ENCODE measurements at regions of chr19 and their contacts with region 1.

Region 1: DNA sequence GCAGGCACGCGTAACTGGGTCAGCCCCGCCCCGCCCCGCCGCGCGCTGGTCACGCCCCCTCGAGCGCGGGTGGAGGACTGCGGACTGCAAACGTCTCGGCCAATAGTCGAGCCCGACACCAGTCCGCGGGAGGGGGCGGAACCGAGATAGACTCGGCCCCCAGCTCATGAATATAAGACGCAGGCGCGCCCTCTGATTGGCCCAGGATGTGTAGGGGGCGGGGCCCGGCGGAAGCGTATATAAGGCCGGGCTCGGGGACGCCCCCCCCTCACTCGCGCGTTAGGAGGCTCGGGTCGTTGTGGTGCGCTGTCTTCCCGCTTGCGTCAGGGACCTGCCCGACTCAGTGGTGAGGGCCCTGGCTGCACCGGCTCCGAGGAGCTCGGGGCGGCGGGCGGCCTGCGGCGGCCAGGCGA is at the start of gene CIRBP:
- DNase-seq: peak; percentile 97 to 100 (median 99)
- ATAC-seq: peak; percentile 76 to 84
- H3K4me3 Mint-ChIP-seq: peak within 1 kb of the TSS; percentile 82 to 93 (median 89)
- H3K27ac Mint-ChIP-seq: peak within 1 kb of the TSS; percentile 83 to 97 (median 94)
- H3K4me1 Mint-ChIP-seq: peaks cover 40 to 82% (median 77%) of the 10 kb centered on the region in 4 donors
- H3K27me3 Mint-ChIP-seq: no peaks in the 10 kb centered on the region
- polyA plus RNA-seq, gene CIRBP: 204 to 273 (median 262) TPM

Region 2: GRCh38 chr19:984165-984967 is 284.7 kb before region 1 on chr19 and contains the start of gene WDR18:
- POLR2A ChIA-PET with region 1: interaction called, 10 read pairs
- DNase-seq: peak; percentile 73 to 94 (median 80)
- ATAC-seq: peak; percentile 86 to 89
- H3K4me3 Mint-ChIP-seq: peak within 1 kb of the TSS; percentile 87 to 99 (median 92)
- H3K27ac Mint-ChIP-seq: peak within 1 kb of the TSS; percentile 63 to 96 (median 92)
- H3K4me1 Mint-ChIP-seq: peaks cover 12 to 25% (median 20%) of the 10 kb centered on the region in 4 donors
- H3K27me3 Mint-ChIP-seq: no peaks in the 10 kb centered on the region
- polyA plus RNA-seq, gene WDR18: 51.2 to 72.7 (median 64.1) TPM

Region 3: DNA sequence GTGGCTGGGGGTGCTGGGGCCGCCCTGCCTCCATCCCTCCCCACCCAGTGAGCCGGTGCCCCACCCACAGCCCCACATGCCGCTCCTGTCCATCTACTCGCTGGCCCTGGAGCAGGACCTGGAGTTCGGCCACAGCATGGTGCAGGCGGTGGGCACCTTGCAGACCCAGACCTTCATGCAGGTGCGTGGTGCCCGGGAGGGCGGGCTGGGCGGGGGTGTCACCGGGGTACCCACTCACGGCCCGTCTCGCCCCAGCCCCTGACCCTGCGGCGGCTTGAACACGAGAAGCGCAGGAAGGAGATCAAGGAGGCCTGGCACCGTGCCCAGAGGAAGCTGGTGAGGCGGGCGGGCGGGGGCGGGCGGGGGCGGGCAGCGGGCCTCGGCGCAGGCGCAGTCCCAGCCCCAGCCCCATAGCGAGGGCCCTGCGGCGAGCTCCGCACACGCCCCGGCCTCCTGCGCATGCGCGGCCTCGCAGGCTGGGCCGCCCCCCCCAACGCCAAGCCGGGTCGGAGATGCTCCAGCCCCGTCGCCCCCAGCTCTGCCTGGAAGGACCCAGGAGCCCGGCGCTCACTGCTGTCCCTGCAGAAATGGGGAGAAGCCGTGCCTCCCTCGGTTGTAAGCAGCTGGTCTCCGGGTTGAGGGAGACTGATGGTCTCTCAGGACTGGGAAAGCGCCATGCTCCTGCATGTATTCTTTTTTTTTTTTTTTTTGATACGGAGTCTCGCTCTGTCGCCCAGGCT is 194.4 kb before region 1 on chr19:
- POLR2A ChIA-PET with region 1: interaction called, 36 read pairs
- DNase-seq: peak; percentile 91 to 100 (median 95)
- ATAC-seq: peak; percentile 37 to 42
- H3K4me3 Mint-ChIP-seq: peak overlapping the region; percentile 77 to 96 (median 86)
- H3K27ac Mint-ChIP-seq: peak overlapping the region; percentile 97 to 100 (median 99)
- H3K4me1 Mint-ChIP-seq: peaks cover 23 to 63% (median 51%) of the 10 kb centered on the region in 4 donors
- H3K27me3 Mint-ChIP-seq: peaks cover 0 to 4% (median 0%) of the 10 kb centered on the region in 5 donors

Region 4: DNA sequence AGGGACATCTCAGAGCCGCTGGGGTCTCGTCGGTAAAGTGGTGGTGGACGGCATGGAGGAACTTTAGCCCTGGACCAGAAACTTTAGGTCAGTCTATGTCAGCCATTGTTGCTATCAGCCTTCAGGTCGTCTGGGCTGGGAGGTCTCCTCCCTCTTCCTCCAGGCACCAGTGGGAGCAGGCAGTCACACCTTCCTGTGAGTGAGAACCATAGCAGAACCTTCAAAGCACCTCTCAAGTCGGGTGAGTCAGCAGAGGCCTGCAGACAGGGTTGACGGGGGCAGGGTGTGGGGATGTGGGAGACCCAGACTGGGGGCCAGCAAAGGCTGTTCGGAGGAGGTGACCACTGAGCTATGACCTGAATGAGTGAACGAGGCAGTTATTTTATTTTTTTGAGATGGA is 79.7 kb before region 1 on chr19:
- POLR2A ChIA-PET with region 1: interaction called, 14 read pairs
- DNase-seq: peak in 2 of 10 donors; percentile 33 to 39
- ATAC-seq: peak; percentile 31
- H3K4me3 Mint-ChIP-seq: peak overlapping the region in 3 of 10 donors; percentile 14 to 63 (median 52)
- H3K27ac Mint-ChIP-seq: peak overlapping the region in 8 of 10 donors; percentile 13 to 95 (median 78)
- H3K4me1 Mint-ChIP-seq: peaks cover 6 to 20% (median 19%) of the 10 kb centered on the region in 4 donors
- H3K27me3 Mint-ChIP-seq: no peaks in the 10 kb centered on the region

Region 5: DNA sequence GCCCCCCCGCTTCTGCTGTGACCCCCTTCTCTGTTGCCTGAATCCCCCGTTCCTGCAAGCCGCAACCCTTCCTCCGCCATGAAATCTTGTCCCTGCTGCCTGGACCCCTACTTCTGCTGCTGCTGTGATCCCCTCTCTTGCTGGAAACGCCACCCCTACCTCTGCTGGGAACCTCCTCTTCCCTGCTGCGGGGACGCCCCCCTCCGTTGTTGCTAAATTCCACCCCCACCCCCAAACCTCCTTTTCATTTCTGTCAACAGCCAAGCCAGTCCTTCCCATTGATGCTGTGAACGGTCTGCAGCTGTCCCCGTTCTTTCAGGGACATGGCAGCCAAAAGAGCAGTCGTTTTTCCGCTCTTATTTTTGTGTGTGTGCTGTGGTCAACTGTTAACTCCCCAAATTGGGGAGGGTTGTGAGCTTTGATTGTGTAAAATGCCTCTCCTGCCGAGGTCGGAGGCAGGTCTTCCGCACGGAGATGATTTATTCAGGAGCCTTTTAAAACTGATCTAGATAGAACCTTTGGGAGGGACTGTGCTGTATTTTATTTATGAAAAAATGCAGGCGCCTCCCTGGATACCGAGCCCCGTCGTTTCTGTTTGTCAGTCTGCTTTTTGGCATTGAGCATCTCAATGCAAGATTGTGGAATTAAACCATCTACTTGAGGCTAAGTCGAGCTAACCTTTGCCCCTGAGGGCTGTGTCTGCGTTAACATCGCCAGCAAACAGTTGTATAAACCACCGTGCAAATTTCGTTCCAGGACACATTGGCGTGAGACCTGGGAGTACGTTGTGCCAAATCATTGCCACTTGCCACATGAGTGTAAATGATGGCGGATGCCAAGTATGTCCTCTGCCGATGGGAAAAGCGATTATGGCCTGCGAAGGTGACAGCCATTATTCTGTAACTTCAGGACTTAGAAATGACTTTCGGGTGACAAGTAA is 86.8 kb after region 1 on chr19:
- POLR2A ChIA-PET with region 1: interaction called, 16 read pairs
- DNase-seq: no peak
- ATAC-seq: no peak
- H3K4me3 Mint-ChIP-seq: peak overlapping the region; percentile 72 to 96 (median 87)
- H3K27ac Mint-ChIP-seq: peak overlapping the region; percentile 12 to 90 (median 78)
- H3K4me1 Mint-ChIP-seq: peaks cover 11 to 25% (median 16%) of the 10 kb centered on the region in 4 donors
- H3K27me3 Mint-ChIP-seq: no peaks in the 10 kb centered on the region

Region 6: GRCh38 chr19:1490311-1491113 is 221.4 kb after region 1 on chr19 and contains the start of gene PCSK4:
- POLR2A ChIA-PET with region 1: interaction called, 12 read pairs
- DNase-seq: peak; percentile 94 to 100 (median 98)
- ATAC-seq: peak; percentile 84 to 88
- H3K4me3 Mint-ChIP-seq: peak within 1 kb of the TSS; percentile 85 to 93 (median 88)
- H3K27ac Mint-ChIP-seq: peak within 1 kb of the TSS; percentile 14 to 97 (median 89)
- H3K4me1 Mint-ChIP-seq: peaks cover 8 to 22% (median 15%) of the 10 kb centered on the region in 4 donors
- H3K27me3 Mint-ChIP-seq: no peaks in the 10 kb centered on the region
- polyA plus RNA-seq, gene PCSK4: 0.35 to 1.3 (median 1.2) TPM